ENCODE measurements at regions of chr15 and their contacts with region 1.

Region 1: DNA sequence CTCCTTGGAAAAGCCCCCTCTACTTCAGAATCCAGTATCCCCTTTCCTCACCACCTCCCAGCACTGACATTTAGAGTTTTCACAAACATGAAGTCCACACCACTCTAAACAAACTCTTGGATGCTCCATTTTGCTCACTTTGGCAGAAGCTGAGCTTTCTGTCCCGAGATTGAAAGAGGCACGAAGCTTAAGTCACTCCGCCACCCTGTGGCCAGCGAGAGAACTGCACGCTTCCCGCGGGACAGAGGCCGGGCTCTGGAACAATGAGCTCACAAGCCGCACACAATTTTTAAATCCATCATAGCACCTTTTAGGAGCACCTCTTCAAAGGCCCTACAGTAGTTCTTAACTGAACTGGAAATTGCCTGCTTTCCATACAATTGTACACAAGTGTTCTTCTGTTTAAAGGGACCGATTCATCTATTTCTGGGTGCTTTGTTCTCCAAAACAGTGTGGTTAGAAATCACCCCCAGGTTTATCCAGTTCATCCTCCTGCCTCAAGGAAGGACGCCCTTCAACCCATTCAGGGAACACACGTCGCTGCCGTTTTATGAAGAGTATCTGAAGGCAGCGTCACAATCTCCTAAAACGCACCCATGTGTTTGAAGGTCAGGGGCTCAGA is 226.1 kb downstream of the VPS13C start:
- DNase-seq: peak; percentile 81
- H3K4me3 ChIP-seq: no peak overlapping the region
- H3K27ac ChIP-seq: no peak overlapping the region
- H3K4me1 ChIP-seq: no peaks in the 10 kb centered on the region
- H3K27me3 ChIP-seq: no peaks in the 10 kb centered on the region
- CTCF ChIP-seq: peak; percentile 98

Region 2: DNA sequence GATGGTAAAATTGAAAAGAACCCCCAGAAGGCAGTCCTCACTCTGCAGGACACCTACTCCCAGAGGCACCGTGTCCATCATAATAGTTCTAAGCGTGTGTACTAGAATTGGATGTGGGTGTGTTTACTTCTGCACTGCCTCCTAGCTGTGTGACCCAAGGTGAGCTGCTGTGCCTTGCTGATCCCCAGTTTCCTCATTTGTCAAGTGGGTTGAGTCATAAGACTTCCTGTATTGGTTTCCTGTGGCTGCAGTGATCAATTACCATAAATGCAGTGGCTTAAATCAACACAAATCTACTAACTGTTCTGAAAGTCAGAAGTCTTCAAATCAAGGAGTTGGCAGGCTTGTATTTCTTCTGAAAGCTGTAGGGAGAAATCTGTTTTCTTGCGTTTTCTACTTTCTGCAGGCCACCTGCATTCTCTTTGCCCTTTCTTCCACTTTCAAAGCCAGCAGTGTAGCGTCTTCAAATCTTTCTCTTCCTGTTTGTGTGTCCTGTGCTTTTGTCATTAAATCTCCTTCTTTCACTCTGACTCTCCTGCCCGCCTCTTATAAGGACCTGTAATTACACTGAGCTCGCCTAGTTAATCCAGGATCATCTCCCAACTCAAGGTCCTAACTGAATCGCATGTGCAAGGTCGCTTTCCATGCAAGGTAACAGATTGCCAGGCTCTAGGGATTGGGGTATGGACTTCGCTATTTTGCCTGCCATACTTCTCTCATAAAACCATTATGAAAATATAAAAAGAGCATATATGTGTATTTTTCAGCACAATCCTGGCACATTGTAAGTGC is 664.1 kb before region 1 on chr15:
- intact Hi-C with region 1: loop called (anchors 5 kb)
- DNase-seq: no peak
- H3K4me3 ChIP-seq: no peak overlapping the region
- H3K27ac ChIP-seq: no peak overlapping the region
- H3K4me1 ChIP-seq: no peaks in the 10 kb centered on the region
- H3K27me3 ChIP-seq: no peaks in the 10 kb centered on the region
- CTCF ChIP-seq: no peak

Region 3: GRCh38 chr15:61697796-61698195 is 136.4 kb before region 1 on chr15:
- intact Hi-C with region 1: loop called (anchors 10 kb)
- DNase-seq: no peak
- H3K4me3 ChIP-seq: no peak overlapping the region
- H3K27ac ChIP-seq: no peak overlapping the region
- H3K4me1 ChIP-seq: no peaks in the 10 kb centered on the region
- H3K27me3 ChIP-seq: no peaks in the 10 kb centered on the region
- CTCF ChIP-seq: no peak

Region 4: GRCh38 chr15:61893146-61893545 is 59.0 kb after region 1 on chr15:
- intact Hi-C with region 1: no loop called
- DNase-seq: no peak
- H3K4me3 ChIP-seq: no peak overlapping the region
- H3K27ac ChIP-seq: no peak overlapping the region
- H3K4me1 ChIP-seq: no peaks in the 10 kb centered on the region
- H3K27me3 ChIP-seq: no peaks in the 10 kb centered on the region
- CTCF ChIP-seq: no peak

Region 5: GRCh38 chr15:62606376-62607113 is 772.4 kb after region 1 on chr15:
- intact Hi-C with region 1: no loop called
- DNase-seq: no peak
- H3K4me3 ChIP-seq: no peak overlapping the region
- H3K27ac ChIP-seq: no peak overlapping the region
- H3K4me1 ChIP-seq: peaks cover 6% of the 10 kb centered on the region
- H3K27me3 ChIP-seq: no peaks in the 10 kb centered on the region
- CTCF ChIP-seq: no peak

Measured in colonic mucosa (tissue), 4 donors.